Naive thymus-derived CD8-positive, alpha-beta T cell (primary cell): ENCODE measurements at regions of chr12 and their contacts with region 1.

Region 1: GRCh38 chr12:121793838-121794533 is 498 bp upstream of the RHOF start:
- DNase-seq: peak; percentile 91 to 98 (median 95)
- ATAC-seq: peak; percentile 49 to 59
- H3K4me3 Mint-ChIP-seq: peak overlapping the region; percentile 75 to 96 (median 86)
- H3K27ac Mint-ChIP-seq: peak overlapping the region; percentile 87 to 99 (median 97)
- H3K4me1 Mint-ChIP-seq: peaks cover 46 to 80% (median 73%) of the 10 kb centered on the region in 4 donors
- H3K27me3 Mint-ChIP-seq: no peaks in the 10 kb centered on the region

Region 2: DNA sequence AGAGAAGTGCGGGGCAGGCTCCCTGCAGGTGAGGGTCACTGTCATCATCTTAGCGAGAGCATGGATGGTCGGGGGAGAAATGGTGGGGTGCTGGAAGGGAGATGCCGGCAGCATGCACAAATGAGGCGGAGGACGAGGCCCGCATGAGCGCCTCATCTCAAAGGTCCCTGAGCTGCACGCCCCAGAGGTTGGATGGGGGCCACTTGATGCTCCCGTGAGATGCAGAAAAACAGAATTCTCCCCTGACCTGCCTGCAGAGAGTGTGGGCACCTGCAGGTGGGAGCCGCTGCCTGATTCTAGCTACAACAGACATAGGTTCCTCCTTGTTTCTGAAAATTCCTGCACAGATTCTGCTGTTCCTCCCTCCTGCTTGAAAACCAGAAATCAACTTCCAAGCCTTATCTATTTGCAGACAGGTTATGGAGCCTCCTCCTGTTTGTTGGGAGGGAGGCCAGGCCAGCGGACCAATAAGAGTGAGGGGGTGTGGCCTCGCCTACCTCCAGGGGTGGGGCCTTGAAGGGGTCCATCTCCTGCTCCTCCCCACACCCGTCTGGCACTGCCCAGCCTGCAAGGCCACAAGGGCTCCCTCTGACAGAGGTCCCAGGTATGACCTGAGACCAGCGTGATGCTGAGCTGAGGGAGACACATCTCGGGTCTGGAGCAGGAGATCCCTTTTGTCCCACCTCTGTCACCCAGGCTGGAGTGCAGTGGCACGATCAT is 280.4 kb before region 1 on chr12:
- POLR2A ChIA-PET with region 1: no interaction called
- DNase-seq: no peak
- ATAC-seq: peak; percentile 50 to 55
- H3K4me3 Mint-ChIP-seq: peak overlapping the region in 3 of 10 donors; percentile 7 to 34 (median 23)
- H3K27ac Mint-ChIP-seq: peak overlapping the region; percentile 65 to 96 (median 88)
- H3K4me1 Mint-ChIP-seq: peaks cover 14 to 19% (median 16%) of the 10 kb centered on the region in 4 donors
- H3K27me3 Mint-ChIP-seq: no peaks in the 10 kb centered on the region

Region 3: DNA sequence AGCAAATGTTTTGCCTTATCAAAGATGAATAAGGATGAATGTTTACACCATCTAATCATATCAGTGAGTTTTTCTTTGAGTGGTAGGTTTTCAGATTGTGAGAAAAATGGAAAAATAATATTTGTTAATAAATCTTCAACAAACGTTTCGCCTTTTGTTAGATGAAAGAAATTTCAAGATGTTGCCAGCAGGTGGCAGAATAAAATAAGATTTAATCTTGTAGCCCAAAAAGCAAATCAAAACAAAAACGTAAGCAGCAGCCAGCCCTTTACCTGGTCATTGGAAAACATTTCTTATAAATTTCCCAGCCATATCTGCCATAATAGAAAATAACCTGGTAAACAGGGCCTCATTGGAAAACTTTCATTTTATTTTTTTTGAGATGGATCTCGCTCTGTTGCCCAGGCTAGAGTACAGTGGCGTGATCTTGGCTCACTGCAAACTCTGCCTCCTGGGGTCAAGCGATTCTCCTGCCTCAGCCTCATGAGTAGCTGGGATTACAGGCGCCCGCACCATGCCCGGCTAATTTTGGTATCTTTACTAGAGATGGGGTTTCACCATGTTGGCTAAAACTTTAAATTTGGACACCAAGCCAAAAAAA is 96.8 kb before region 1 on chr12:
- POLR2A ChIA-PET with region 1: interaction called, 13 read pairs
- DNase-seq: peak in 6 of 10 donors; percentile 23 to 73 (median 58)
- ATAC-seq: peak in 1 of 2 donors; percentile 53
- H3K4me3 Mint-ChIP-seq: no peak overlapping the region
- H3K27ac Mint-ChIP-seq: peak overlapping the region in 2 of 10 donors; percentile 25 to 29
- H3K4me1 Mint-ChIP-seq: no peaks in the 10 kb centered on the region
- H3K27me3 Mint-ChIP-seq: peaks cover 0 to 2% (median 0%) of the 10 kb centered on the region in 5 donors

Region 4: GRCh38 chr12:121712461-121713256 is 81.3 kb before region 1 on chr12 and contains the start of gene TMEM120B:
- POLR2A ChIA-PET with region 1: interaction called, 33 read pairs
- DNase-seq: peak; percentile 73 to 92 (median 84)
- ATAC-seq: peak; percentile 82 to 85
- H3K4me3 Mint-ChIP-seq: peak within 1 kb of the TSS; percentile 84 to 98 (median 94)
- H3K27ac Mint-ChIP-seq: peak within 1 kb of the TSS; percentile 82 to 98 (median 94)
- H3K4me1 Mint-ChIP-seq: peaks cover 8 to 49% (median 34%) of the 10 kb centered on the region in 4 donors
- H3K27me3 Mint-ChIP-seq: no peaks in the 10 kb centered on the region
- polyA plus RNA-seq, gene TMEM120B: 2.1 to 2.5 (median 2.4) TPM

Region 5: GRCh38 chr12:121753844-121754264 is 40.1 kb before region 1 on chr12:
- POLR2A ChIA-PET with region 1: no interaction called
- DNase-seq: no peak
- ATAC-seq: no peak
- H3K4me3 Mint-ChIP-seq: no peak overlapping the region
- H3K27ac Mint-ChIP-seq: no peak overlapping the region
- H3K4me1 Mint-ChIP-seq: peaks cover 11 to 20% (median 16%) of the 10 kb centered on the region in 4 donors
- H3K27me3 Mint-ChIP-seq: no peaks in the 10 kb centered on the region

Region 6: GRCh38 chr12:121839106-121839992 is 45.4 kb after region 1 on chr12:
- POLR2A ChIA-PET with region 1: interaction called, 22 read pairs
- DNase-seq: peak; percentile 98 to 100 (median 100)
- ATAC-seq: peak; percentile 96
- H3K4me3 Mint-ChIP-seq: peak overlapping the region; percentile 96 to 100 (median 97)
- H3K27ac Mint-ChIP-seq: peak overlapping the region; percentile 85 to 96 (median 94)
- H3K4me1 Mint-ChIP-seq: peaks cover 5 to 23% (median 19%) of the 10 kb centered on the region in 4 donors
- H3K27me3 Mint-ChIP-seq: no peaks in the 10 kb centered on the region

Region 7: GRCh38 chr12:121888478-121889266 is 94.7 kb after region 1 on chr12 and contains the start of gene PSMD9:
- POLR2A ChIA-PET with region 1: interaction called, 47 read pairs
- DNase-seq: peak; percentile 95 to 99 (median 98)
- ATAC-seq: peak; percentile 93
- H3K4me3 Mint-ChIP-seq: peak within 1 kb of the TSS; percentile 96 to 100 (median 98)
- H3K27ac Mint-ChIP-seq: peak within 1 kb of the TSS; percentile 94 to 100 (median 99)
- H3K4me1 Mint-ChIP-seq: peaks cover 14 to 43% (median 35%) of the 10 kb centered on the region in 4 donors
- H3K27me3 Mint-ChIP-seq: peaks cover 0 to 3% (median 0%) of the 10 kb centered on the region in 5 donors
- polyA plus RNA-seq, gene PSMD9: 88.4 to 90.5 (median 89.4) TPM